ENCODE measurements at regions of chr15 and their contacts with region 1.

Region 1: GRCh38 chr15:78422571-78423340 is 15.3 kb upstream of the IREB2 start:
- DNase-seq: peak; percentile 89
- H3K4me3 ChIP-seq: no peak overlapping the region
- H3K27ac ChIP-seq: no peak overlapping the region
- H3K4me1 ChIP-seq: peaks cover 0 to 14% (median 7%) of the 10 kb centered on the region in 6 donors
- H3K27me3 ChIP-seq: peaks cover 0 to 5% (median 0%) of the 10 kb centered on the region in 7 donors
- CTCF ChIP-seq: peak; percentile 65 to 94 (median 88)
- POLR2A ChIP-seq: no peak

Region 2: DNA sequence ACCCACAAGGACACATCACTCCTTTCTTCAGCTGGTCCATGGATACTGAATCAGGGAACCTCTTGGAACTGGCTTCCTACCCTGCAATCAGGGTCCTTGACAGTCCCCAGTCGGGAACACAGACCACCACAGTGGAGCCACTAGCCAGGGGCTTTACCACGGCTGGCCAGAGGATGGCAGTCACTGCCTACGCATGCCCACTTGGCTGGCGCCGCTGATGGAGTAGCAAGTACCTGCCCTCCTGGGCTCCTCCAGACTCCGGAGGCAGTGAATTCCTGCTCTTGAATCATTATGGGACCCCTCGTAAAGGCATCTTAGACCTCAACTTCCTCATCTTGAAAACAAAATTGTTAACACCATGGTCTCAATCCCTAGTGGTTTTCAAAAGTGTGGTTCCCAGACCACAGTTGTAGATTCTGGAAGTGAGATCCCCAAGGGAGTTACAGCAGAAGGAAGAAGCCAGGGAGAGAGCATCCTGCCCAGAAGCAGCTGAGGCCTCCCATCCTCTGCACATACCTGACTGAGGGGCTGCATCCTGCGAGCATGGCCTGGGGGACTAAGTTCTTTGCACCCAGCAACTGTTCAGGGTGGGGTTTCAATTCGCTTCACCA is 114.2 kb before region 1 on chr15:
- intact Hi-C with region 1: loop called (anchors 2 kb)
- DNase-seq: peak; percentile 83
- H3K4me3 ChIP-seq: no peak overlapping the region
- H3K27ac ChIP-seq: no peak overlapping the region
- H3K4me1 ChIP-seq: peaks cover 0 to 8% (median 4%) of the 10 kb centered on the region in 6 donors
- H3K27me3 ChIP-seq: peaks cover 0 to 25% (median 5%) of the 10 kb centered on the region in 7 donors
- CTCF ChIP-seq: peak; percentile 37 to 77 (median 65)
- POLR2A ChIP-seq: no peak

Region 3: DNA sequence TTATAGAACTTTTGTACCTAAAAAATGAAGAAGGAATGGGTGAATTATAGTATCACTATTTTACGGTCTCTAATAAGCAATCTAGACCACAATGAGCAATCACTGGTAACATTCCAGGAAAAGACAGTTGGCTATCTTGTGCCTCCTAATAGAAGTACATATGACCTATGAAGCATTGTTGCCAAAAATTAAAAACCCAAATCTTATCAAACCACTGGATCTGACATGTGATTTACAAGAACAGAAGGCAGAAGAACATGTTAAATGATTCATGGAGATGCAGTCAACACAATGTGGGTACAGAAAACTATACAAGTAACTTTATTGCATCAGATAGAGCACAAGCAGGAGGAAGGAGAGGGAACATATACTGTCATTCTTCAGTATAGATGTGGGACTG is 70.1 kb after region 1 on chr15:
- intact Hi-C with region 1: no loop called
- DNase-seq: no peak
- H3K4me3 ChIP-seq: no peak overlapping the region
- H3K27ac ChIP-seq: no peak overlapping the region
- H3K4me1 ChIP-seq: no peaks in the 10 kb centered on the region
- H3K27me3 ChIP-seq: no peaks in the 10 kb centered on the region
- CTCF ChIP-seq: no peak
- POLR2A ChIP-seq: no peak

Region 4: DNA sequence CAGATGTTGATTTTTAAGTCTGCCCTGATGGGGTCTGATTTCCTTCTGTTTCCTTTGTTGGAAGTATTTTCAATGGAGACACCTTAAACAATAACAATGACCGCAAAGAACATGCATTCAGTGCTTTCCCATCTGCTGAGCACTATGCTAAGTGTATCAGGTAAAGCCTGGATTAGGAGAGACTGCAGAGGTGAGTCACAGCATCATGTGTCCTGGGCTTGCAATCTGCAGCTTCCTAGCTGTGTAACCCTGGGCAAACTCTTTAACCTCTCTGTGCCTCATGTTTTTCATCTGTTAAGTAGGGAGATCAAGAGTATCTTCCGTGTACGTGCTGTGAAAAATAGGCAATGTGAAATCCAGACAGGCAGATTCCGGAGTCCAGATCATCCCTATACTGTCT is 231.5 kb after region 1 on chr15:
- intact Hi-C with region 1: no loop called
- DNase-seq: no peak
- H3K4me3 ChIP-seq: no peak overlapping the region
- H3K27ac ChIP-seq: no peak overlapping the region
- H3K4me1 ChIP-seq: peaks cover 0 to 6% (median 0%) of the 10 kb centered on the region in 6 donors
- H3K27me3 ChIP-seq: no peaks in the 10 kb centered on the region
- CTCF ChIP-seq: no peak
- POLR2A ChIP-seq: no peak